Right ventricle myocardium inferior (tissue), 1 donor: ENCODE measurements at regions of chr2 and their contacts with region 1.

Region 1: DNA sequence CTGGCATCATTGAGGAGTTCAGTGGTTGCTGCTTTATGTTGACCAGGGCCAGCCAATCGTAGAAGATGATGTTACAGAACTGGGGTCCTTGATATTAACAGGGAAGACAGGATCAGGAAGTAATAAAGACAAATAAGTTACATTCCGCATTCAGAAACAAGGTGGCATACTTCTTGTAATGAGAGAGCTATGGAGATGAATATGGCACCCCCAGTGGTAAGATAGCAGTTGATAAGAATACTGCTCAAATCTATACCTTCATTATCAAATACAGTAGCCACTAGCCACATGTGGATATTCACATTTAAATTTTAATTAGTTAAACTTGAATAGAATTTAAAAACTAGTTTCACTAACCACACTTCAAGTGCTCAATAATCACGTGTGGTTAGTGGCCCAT is 290.4 kb upstream of the RBMS1 start:
- DNase-seq: no peak
- ATAC-seq: no peak

Region 2: GRCh38 chr2:161190050-161190449 is 406.0 kb after region 1 on chr2:
- intact Hi-C with region 1: loop called (anchors 5 kb)
- DNase-seq: no peak
- ATAC-seq: no peak